Caco-2 (cell line): ENCODE measurements at regions of chrX and their contacts with region 1.

Region 1: DNA sequence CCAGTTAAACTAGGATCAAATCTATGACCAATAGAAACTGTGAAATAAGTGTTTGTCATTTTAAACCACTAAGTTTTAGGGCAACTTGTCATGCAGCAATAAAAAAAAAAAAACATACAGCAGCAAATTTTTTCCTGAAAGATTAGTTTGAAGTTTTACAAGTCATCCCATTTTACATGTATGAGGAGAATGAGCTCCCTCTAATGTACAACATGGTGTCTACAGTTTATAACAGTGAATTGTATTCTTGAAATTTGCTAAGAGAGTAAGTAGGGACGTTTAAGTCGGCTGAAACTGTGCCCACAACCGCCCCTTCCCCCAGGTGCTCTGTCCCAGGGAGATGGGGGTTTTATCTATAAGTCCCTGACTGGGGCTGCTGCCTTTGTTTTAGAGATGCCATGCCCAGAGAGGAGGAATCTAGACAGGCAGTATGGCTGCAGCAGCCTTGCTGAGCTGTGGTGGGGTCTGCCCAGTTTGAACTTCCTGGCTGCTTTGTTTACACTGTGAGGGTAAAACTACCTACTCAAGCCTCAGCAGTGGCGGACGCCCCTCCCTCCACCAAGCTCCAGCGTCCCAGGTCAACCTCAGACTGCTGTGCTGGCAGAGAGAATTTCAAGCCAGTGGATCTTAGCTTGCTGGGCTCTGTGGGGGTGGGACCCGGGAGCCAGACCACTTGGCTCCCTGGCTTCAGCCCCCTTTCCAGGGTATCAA is 499.3 kb upstream of the CT83 start:
- DNase-seq: no peak
- H3K4me3 ChIP-seq: no peak overlapping the region
- H3K4me3 Mint-ChIP-seq: no peak overlapping the region
- H3K27ac Mint-ChIP-seq: no peak overlapping the region
- H3K4me1 ChIP-seq: no peaks in the 10 kb centered on the region
- H3K4me1 Mint-ChIP-seq: no peaks in the 10 kb centered on the region
- H3K27me3 ChIP-seq: no peaks in the 10 kb centered on the region
- H3K27me3 Mint-ChIP-seq: no peaks in the 10 kb centered on the region
- CTCF ChIP-seq: no peak

Region 2: DNA sequence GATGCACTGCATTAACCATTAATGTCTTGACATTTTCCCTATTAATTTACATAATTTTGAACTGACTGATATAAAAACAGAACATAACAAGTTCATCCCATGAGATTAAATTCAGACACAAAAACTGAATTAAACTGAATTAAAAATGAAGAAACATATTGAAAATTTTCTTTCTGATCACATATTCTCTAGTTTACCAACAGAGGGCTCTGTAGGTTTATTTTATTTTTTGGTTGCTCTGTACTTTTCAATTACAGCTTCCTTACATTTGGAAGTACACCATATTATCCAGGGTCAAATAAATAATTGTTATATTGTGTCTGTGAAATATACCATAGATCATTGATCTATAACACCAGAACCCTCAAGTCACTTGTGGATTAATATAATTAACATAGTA is 471.9 kb before region 1 on chrX:
- CTCF ChIA-PET with region 1: no interaction called
- POLR2A ChIA-PET with region 1: no interaction called
- intact Hi-C with region 1: loop called (anchors 5 kb)
- DNase-seq: no peak
- H3K4me3 ChIP-seq: no peak overlapping the region
- H3K4me3 Mint-ChIP-seq: no peak overlapping the region
- H3K27ac Mint-ChIP-seq: no peak overlapping the region
- H3K4me1 ChIP-seq: no peaks in the 10 kb centered on the region
- H3K4me1 Mint-ChIP-seq: no peaks in the 10 kb centered on the region
- H3K27me3 ChIP-seq: no peaks in the 10 kb centered on the region
- H3K27me3 Mint-ChIP-seq: no peaks in the 10 kb centered on the region
- CTCF ChIP-seq: peak in 1 of 2 experiments; percentile 2

Region 3: DNA sequence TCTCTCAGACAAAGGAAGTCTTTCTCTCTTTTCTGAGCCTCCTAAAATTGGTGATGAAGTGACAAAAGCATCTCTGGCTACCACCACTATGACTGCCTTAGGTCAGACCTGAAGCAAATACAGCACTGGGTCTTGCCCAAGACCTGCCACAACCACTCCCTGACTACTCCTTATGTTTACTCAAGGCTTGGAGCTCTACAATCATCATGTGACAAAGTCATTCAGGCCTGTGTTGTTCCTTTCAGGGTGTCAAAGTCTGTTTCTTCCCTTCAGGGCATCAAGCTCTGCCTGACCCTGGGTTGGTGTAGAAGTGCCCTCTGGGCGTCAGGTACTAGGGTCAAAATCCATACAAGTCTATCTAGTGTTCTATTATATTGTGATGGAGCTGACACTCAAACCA is 80.0 kb before region 1 on chrX:
- CTCF ChIA-PET with region 1: no interaction called
- POLR2A ChIA-PET with region 1: no interaction called
- intact Hi-C with region 1: no loop called
- DNase-seq: peak in 1 of 2 experiments; percentile 0
- H3K4me3 ChIP-seq: no peak overlapping the region
- H3K4me3 Mint-ChIP-seq: no peak overlapping the region
- H3K27ac Mint-ChIP-seq: no peak overlapping the region
- H3K4me1 ChIP-seq: no peaks in the 10 kb centered on the region
- H3K4me1 Mint-ChIP-seq: no peaks in the 10 kb centered on the region
- H3K27me3 ChIP-seq: no peaks in the 10 kb centered on the region
- H3K27me3 Mint-ChIP-seq: no peaks in the 10 kb centered on the region
- CTCF ChIP-seq: no peak

Region 4: GRCh38 chrX:117871796-117872195 is 909.8 kb after region 1 on chrX:
- CTCF ChIA-PET with region 1: no interaction called
- POLR2A ChIA-PET with region 1: no interaction called
- intact Hi-C with region 1: no loop called
- DNase-seq: no peak
- H3K4me3 ChIP-seq: no peak overlapping the region
- H3K4me3 Mint-ChIP-seq: no peak overlapping the region
- H3K27ac Mint-ChIP-seq: no peak overlapping the region
- H3K4me1 ChIP-seq: no peaks in the 10 kb centered on the region
- H3K4me1 Mint-ChIP-seq: no peaks in the 10 kb centered on the region
- H3K27me3 ChIP-seq: no peaks in the 10 kb centered on the region
- H3K27me3 Mint-ChIP-seq: no peaks in the 10 kb centered on the region
- CTCF ChIP-seq: no peak